ENCODE measurements at regions of chr3 and their contacts with region 1.

Region 1: DNA sequence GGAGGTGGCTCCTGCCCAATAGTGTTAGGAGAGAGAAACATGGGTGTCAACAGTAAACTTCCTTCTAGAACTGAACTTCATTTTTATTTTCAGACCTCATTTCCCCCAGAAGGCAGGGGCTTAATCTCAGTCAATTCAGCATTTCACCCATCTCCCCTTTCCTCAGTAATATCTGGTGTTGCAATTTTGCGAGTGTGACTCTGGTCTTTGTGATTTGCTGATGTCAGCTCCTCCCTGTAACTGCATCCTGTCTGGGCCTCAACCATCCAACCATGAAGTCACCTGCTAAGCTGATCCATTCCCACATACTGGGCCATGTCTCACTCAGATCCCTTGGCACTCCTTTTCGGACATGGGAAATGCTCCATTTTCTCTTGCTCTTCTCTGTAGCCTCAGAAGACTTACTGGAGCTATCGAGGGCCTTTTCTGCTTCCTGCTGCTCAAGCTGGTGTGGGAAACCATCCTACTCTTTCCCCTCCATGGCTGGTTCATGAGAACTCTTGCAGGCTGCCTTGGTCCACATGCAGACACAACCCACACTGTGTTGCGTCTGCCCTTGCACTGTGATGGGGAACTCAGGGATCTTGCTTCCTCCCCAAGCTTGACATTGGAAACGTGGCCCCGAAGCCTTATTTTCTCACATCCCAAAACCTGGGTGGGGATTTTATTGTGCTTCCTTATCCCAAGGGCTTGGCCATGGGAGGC is 24.6 kb downstream of the CCR4 start:
- DNase-seq: no peak
- ATAC-seq: no peak
- H3K4me3 ChIP-seq: no peak overlapping the region
- H3K27ac ChIP-seq: no peak overlapping the region
- H3K4me1 ChIP-seq: no peaks in the 10 kb centered on the region
- H3K27me3 ChIP-seq: no peaks in the 10 kb centered on the region
- CTCF ChIP-seq: no peak

Region 2: GRCh38 chr3:32960404-32961170 is 15.5 kb before region 1 on chr3:
- CTCF ChIA-PET with region 1: no interaction called
- POLR2A ChIA-PET with region 1: no interaction called
- intact Hi-C with region 1: no loop called
- DNase-seq: no peak
- ATAC-seq: no peak
- H3K4me3 ChIP-seq: no peak overlapping the region
- H3K27ac ChIP-seq: no peak overlapping the region
- H3K4me1 ChIP-seq: no peaks in the 10 kb centered on the region
- H3K27me3 ChIP-seq: no peaks in the 10 kb centered on the region
- CTCF ChIP-seq: no peak

Region 3: GRCh38 chr3:33030802-33031201 is 54.8 kb after region 1 on chr3:
- CTCF ChIA-PET with region 1: no interaction called
- POLR2A ChIA-PET with region 1: interaction called, 10 read pairs
- intact Hi-C with region 1: no loop called
- DNase-seq: no peak
- ATAC-seq: no peak
- H3K4me3 ChIP-seq: no peak overlapping the region
- H3K27ac ChIP-seq: no peak overlapping the region
- H3K4me1 ChIP-seq: peaks cover 20% of the 10 kb centered on the region
- H3K27me3 ChIP-seq: no peaks in the 10 kb centered on the region
- CTCF ChIP-seq: peak; percentile 34

Region 4: GRCh38 chr3:33131331-33132018 is 155.4 kb after region 1 on chr3:
- CTCF ChIA-PET with region 1: no interaction called
- POLR2A ChIA-PET with region 1: no interaction called
- intact Hi-C with region 1: no loop called
- DNase-seq: peak; percentile 85
- ATAC-seq: peak; percentile 83
- H3K4me3 ChIP-seq: no peak overlapping the region
- H3K27ac ChIP-seq: no peak overlapping the region
- H3K4me1 ChIP-seq: 0 out of 2 replicates have a peak, but pooled peaks cover 3% of the 10 kb centered on the region
- H3K27me3 ChIP-seq: no peaks in the 10 kb centered on the region
- CTCF ChIP-seq: peak; percentile 94